K562 (cell line): ENCODE measurements at regions of chr1 and their contacts with region 1.

Region 1: DNA sequence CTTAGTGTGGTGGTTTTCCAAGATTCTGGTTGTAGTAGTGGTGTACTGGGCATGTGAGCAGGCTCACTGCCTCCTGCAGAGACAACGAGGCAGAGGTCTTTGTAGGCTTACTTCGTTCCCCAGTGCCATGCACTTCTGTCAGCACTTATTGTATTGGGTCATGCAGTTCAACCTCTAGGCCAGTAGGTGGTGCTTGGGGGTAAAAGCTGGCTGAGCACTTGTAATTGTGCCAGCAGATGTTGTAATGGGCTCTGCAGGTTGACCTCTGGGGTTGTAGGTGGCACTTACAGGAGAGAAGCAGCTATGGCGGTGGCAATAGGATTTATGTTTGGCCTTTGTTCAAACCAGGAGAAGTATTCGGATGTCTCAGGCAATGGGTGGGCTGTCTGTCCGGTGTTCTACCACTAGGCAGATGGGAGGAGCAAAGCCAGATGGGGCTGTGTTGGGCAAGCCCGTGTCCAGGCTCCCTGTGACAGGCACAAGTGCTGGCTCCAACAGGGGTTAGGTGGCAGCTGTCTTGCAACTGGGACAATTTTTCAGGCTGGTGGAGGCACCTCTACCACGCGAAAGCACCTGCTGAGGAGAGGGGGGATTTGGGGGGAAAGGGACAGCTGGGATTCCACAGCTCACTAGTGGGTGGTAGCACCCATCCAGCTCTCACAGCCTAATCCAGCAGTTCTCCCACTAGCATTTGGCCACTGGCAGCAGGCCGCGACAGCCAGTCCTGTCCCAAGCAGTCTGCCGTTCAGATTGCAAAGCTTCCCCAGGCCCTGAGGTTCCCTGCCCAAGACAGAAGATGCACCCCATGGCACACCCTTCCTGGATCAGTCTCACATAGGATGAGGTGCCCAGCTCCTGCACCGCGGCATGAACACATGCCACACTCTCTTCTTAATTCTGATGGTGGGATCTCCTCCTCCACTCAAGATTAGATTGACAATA is 274.5 kb downstream of the CTH start:
- DNase-seq: peak; percentile 60 to 83 (median 68)
- ATAC-seq: peak; percentile 96
- H3K4me3 ChIP-seq: no peak overlapping the region
- H3K27ac ChIP-seq: no peak overlapping the region
- H3K4me1 ChIP-seq: peaks cover 3 to 5% of the 10 kb centered on the region in 2 experiments; a peak in 2 of 5 replicates
- H3K27me3 ChIP-seq: no peaks in the 10 kb centered on the region
- CTCF ChIP-seq: peak; percentile 84 to 90 (median 88)
- EP300 ChIP-seq: no peak
- POLR2A ChIP-seq: no peak
- RAD21 ChIP-seq: peak; percentile 81 to 92

Region 2: GRCh38 chr1:70896224-70896623 is 210.7 kb after region 1 on chr1:
- CTCF ChIA-PET with region 1: no interaction called
- POLR2A ChIA-PET with region 1: no interaction called
- in situ Hi-C with region 1: no loop called
- intact Hi-C with region 1: loop called (anchors 5 kb)
- DNase-seq: no peak
- ATAC-seq: peak; percentile 80
- H3K4me3 ChIP-seq: no peak overlapping the region
- H3K27ac ChIP-seq: no peak overlapping the region
- H3K4me1 ChIP-seq: peaks cover 0 to 24% of the 10 kb centered on the region in 2 experiments; a peak in 3 of 5 replicates
- H3K27me3 ChIP-seq: no peaks in the 10 kb centered on the region
- CTCF ChIP-seq: peak; percentile 30 to 52 (median 36); a peak in 4 of 6 replicates
- EP300 ChIP-seq: no peak
- POLR2A ChIP-seq: no peak
- RAD21 ChIP-seq: peak; percentile 30 to 68; a peak in 3 of 4 replicates

Region 3: DNA sequence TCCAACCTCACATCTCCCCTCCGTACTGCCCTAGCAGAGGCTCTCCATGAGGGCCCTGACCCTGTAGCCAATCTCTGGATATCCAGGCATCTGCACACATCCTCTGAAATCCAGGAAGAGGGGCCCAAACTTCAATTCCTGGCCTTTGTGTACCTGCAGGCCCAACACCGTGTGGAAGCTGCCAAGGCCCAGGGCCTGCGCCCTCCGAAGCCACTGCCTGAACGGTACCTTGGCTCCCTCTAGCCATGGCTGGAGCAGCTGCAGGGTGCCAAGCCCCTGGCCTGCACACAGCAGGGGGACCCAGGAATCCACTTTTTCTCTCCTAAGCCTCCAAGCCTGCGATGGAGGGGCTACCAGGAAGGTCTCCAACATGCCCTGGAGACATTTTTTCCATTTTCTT is 277.8 kb after region 1 on chr1:
- CTCF ChIA-PET with region 1: no interaction called
- POLR2A ChIA-PET with region 1: no interaction called
- in situ Hi-C with region 1: no loop called
- intact Hi-C with region 1: loop called (anchors 10 kb)
- DNase-seq: no peak
- ATAC-seq: peak; percentile 42; the same call in 1 of the 3 replicates
- H3K4me3 ChIP-seq: no peak overlapping the region
- H3K27ac ChIP-seq: no peak overlapping the region
- H3K4me1 ChIP-seq: peaks cover 0 to 4% of the 10 kb centered on the region in 2 experiments; a peak in 1 of 5 replicates
- H3K27me3 ChIP-seq: no peaks in the 10 kb centered on the region
- CTCF ChIP-seq: peak in 1 of 3 experiments; percentile 19; a peak in 2 of 6 replicates
- EP300 ChIP-seq: no peak
- POLR2A ChIP-seq: no peak
- RAD21 ChIP-seq: no peak